ENCODE measurements at regions of chr20 and their contacts with region 1.

Region 1: GRCh38 chr20:24992487-24993205 is at the start of gene APMAP:
- DNase-seq: peak; percentile 95 to 98 (median 97)
- H3K4me3 ChIP-seq: peak within 1 kb of the TSS; percentile 64 to 100 (median 95)
- H3K27ac ChIP-seq: peak within 1 kb of the TSS; percentile 82 to 99 (median 95)
- H3K27me3 ChIP-seq: no peaks in the 10 kb centered on the region
- CTCF ChIP-seq: peak in 38 of 56 donors; percentile 6 to 53 (median 30)
- total RNA-seq, gene APMAP: 43.1 to 113 (median 90.4) TPM

Region 2: GRCh38 chr20:25032478-25033280 is 40.0 kb after region 1 on chr20:
- intact Hi-C with region 1: loop called (anchors 2 kb)
- DNase-seq: peak; percentile 53 to 97 (median 94)
- H3K4me3 ChIP-seq: peak overlapping the region in 41 of 59 donors; percentile 1 to 54 (median 29)
- H3K27ac ChIP-seq: peak overlapping the region; percentile 75 to 99 (median 97)
- H3K27me3 ChIP-seq: no peaks in the 10 kb centered on the region
- CTCF ChIP-seq: peak in 24 of 56 donors; percentile 3 to 55 (median 25)

Region 3: GRCh38 chr20:25065625-25066338 is 73.1 kb after region 1 on chr20:
- intact Hi-C with region 1: loop called (anchors 1 to 2 kb)
- DNase-seq: peak in 8 of 10 donors; percentile 57 to 86 (median 70)
- H3K4me3 ChIP-seq: peak overlapping the region in 8 of 59 donors; percentile 0 to 24 (median 9)
- H3K27ac ChIP-seq: peak overlapping the region in 6 of 59 donors; percentile 24 to 59 (median 39)
- H3K27me3 ChIP-seq: peaks cover 0 to 8% (median 0%) of the 10 kb centered on the region in 45 donors
- CTCF ChIP-seq: peak; percentile 67 to 97 (median 89)

Region 4: GRCh38 chr20:25178563-25179438 is 186.2 kb after region 1 on chr20:
- intact Hi-C with region 1: loop called (anchors 2 to 5 kb)
- DNase-seq: no peak
- H3K4me3 ChIP-seq: no peak overlapping the region
- H3K27ac ChIP-seq: no peak overlapping the region
- H3K27me3 ChIP-seq: no peaks in the 10 kb centered on the region
- CTCF ChIP-seq: peak; percentile 29 to 85 (median 72)

Region 5: DNA sequence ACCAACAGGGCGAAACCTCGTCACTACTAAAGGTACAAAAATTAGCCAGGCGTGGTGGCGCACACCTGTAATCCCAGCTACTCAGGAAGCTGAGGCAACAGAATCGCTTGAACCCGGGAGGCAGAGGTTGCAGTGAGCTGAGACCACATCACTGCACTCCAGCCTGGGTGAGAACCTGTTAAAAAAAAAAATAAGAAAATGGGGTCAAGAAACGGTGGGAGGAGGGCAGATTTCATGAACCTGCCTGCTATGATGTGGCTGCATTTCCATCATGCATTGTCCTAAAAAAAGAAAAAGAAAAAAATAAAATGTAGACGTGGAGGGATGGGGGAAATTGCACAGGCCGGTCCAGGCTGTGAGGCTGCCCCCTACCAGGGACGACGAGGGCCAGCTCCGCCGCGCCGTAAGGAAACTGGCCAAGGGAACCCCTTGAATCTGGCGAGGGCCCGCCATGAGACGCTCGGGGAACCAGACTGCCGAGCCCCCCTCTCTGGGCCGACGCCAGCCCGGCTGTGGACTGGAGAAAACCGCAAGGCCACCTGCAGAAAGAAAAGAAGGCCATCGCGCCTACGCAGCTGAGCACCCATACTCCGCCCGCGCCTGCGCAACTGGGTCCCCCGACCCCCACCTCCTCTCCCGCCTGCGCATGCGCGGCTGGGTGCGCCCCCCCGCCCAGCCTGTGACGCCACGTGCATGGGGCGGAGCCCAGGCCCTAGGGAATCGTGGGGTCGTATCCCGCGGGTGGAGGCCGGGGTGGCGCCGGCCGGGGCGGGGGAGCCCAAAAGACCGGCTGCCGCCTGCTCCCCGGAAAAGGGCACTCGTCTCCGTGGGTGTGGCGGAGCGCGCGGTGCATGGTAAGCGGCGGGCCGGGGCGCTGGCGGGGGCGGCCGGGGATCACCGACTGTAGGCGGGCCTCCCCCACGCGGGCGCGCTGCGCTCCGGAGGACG is 202.6 kb after region 1 on chr20 and contains the start of gene ENTPD6:
- intact Hi-C with region 1: loop called in 1 of 2 experiments (anchors 5 kb)
- DNase-seq: peak; percentile 84 to 97 (median 90)
- H3K4me3 ChIP-seq: peak within 1 kb of the TSS; percentile 77 to 100 (median 95)
- H3K27ac ChIP-seq: peak within 1 kb of the TSS; percentile 79 to 100 (median 94)
- H3K27me3 ChIP-seq: no peaks in the 10 kb centered on the region
- CTCF ChIP-seq: peak in 51 of 56 donors; percentile 14 to 70 (median 44)
- total RNA-seq, gene ENTPD6: 90.8 to 200 (median 142) TPM

Region 6: DNA sequence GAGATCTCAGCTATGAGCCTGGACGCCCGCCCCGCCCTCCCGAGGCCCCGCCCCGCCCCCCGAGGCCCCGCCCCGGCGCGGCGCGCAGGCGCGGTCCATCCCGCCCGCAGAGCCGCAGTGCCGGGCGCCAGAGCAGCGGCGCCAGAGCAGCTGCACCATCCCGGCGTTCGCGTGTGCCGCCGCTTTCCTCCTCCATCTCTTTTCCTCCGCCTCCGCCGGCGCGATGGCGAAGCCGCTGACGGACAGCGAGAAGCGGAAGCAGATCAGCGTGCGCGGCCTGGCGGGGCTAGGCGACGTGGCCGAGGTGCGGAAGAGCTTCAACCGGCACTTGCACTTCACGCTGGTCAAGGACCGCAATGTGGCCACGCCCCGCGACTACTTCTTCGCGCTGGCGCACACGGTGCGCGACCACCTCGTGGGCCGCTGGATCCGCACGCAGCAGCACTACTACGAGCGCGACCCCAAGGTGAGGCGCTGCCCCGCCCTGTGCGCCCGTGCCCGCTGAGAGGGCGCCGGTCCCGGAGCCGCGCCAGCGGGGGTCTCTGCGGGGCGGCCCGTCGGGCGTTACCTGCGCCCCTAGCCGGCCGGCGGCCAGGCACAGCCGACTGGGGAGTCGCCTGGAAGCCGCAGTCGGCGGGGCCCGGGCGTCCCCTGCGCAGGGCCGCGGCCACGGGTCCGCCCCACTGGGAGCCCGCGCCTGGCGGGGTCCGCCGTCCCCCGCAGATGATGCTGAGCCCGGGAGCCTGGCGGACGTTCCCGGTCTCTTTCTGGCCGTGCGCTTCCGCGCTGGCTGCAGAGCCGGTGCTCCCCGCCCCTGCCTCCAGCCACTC is 255.5 kb after region 1 on chr20 and contains the start of gene PYGB:
- intact Hi-C with region 1: loop called in 1 of 2 experiments (anchors 2 kb)
- DNase-seq: peak; percentile 60 to 90 (median 77)
- H3K4me3 ChIP-seq: peak within 1 kb of the TSS; percentile 64 to 97 (median 88)
- H3K27ac ChIP-seq: peak within 1 kb of the TSS; percentile 63 to 98 (median 91)
- H3K27me3 ChIP-seq: no peaks in the 10 kb centered on the region
- CTCF ChIP-seq: peak in 11 of 56 donors; percentile 4 to 17 (median 8)
- total RNA-seq, gene PYGB: 83.2 to 226 (median 146) TPM

Region 7: GRCh38 chr20:25399037-25399430 is 406.4 kb after region 1 on chr20:
- intact Hi-C with region 1: loop called (anchors 2 to 5 kb)
- DNase-seq: peak in 4 of 10 donors; percentile 21 to 71 (median 53)
- H3K4me3 ChIP-seq: peak overlapping the region in 2 of 59 donors; percentile 4 to 17
- H3K27ac ChIP-seq: peak overlapping the region in 46 of 59 donors; percentile 2 to 86 (median 52)
- H3K27me3 ChIP-seq: no peaks in the 10 kb centered on the region
- CTCF ChIP-seq: peak; percentile 28 to 91 (median 75)

Measured in dorsolateral prefrontal cortex (tissue), 120 donors.